ENCODE measurements at regions of chr19 and their contacts with region 1.

Region 1: GRCh38 chr19:17282488-17283255 is 971 bp downstream of the ANKLE1 start:
- DNase-seq: no peak
- H3K4me3 ChIP-seq: peak overlapping the region; percentile 28
- H3K27me3 ChIP-seq: no peaks in the 10 kb centered on the region
- CTCF ChIP-seq: peak; percentile 95

Region 2: GRCh38 chr19:17069218-17069617 is 213.5 kb before region 1 on chr19:
- CTCF ChIA-PET with region 1: interaction called, 25 read pairs
- POLR2A ChIA-PET with region 1: no interaction called
- DNase-seq: no peak
- H3K4me3 ChIP-seq: no peak overlapping the region
- H3K27me3 ChIP-seq: no peaks in the 10 kb centered on the region
- CTCF ChIP-seq: no peak

Region 3: GRCh38 chr19:17075035-17075863 is 207.4 kb before region 1 on chr19 and contains the starts of genes HAUS8 and MYO9B:
- CTCF ChIA-PET with region 1: interaction called, 25 read pairs
- POLR2A ChIA-PET with region 1: no interaction called
- DNase-seq: peak; percentile 93
- H3K4me3 ChIP-seq: peak within 1 kb of the TSS; percentile 95
- H3K27me3 ChIP-seq: no peaks in the 10 kb centered on the region
- CTCF ChIP-seq: no peak
- polyA plus RNA-seq, gene HAUS8: 11.0 and 14.0 TPM in 2 replicates
- polyA plus RNA-seq, gene MYO9B: 26.5 and 40.8 TPM in 2 replicates

Region 4: DNA sequence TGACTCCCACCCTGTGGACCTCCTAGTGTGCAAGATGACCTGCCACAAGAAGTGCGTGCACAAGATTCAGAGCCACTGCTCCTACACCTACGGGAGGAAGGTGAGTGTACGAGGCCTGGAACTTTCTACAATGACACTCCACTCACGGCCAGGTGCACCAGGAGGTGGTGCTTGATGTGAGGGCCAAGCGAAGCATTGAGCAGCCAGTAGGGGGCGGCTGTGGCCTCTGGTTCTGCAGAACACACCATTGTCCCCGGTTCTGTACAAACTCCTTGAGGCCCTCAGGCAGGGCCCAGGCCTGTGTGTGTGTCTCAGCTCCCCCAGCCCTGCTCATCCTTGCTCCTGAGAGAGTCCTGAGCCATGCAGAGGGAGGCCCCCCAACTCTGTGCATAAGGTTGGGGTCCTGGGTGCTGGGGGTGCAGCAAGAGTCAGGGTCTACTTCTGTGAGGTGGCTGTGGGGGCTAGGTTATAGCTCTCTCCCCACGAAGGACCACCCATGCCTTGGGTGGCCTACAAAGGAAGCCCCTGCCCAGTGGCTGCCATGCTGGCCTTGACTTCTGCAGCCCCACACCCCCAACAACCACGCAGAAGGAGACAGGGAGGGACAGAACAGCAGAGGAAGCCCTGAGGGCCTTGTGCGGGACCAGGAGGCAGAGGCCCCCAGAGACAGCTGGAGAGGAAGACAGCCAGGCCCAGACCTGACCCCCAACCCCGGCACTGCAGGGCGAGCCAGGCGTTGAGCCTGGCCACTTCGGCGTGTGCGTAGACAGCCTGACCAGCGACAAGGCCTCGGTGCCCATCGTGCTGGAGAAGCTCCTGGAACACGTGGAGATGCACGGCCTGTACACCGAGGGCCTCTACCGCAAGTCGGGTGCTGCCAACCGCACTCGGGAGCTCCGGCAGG is 77.2 kb before region 1 on chr19:
- CTCF ChIA-PET with region 1: interaction called, 24 read pairs
- POLR2A ChIA-PET with region 1: no interaction called
- DNase-seq: no peak
- H3K4me3 ChIP-seq: no peak overlapping the region
- H3K27me3 ChIP-seq: no peaks in the 10 kb centered on the region
- CTCF ChIP-seq: peak; percentile 73

Region 5: GRCh38 chr19:17415121-17415520 is 132.4 kb after region 1 on chr19:
- CTCF ChIA-PET with region 1: no interaction called
- POLR2A ChIA-PET with region 1: no interaction called
- DNase-seq: no peak
- H3K4me3 ChIP-seq: no peak overlapping the region
- H3K27me3 ChIP-seq: 0 out of 2 replicates have a peak, but pooled peaks cover 1% of the 10 kb centered on the region
- CTCF ChIP-seq: no peak

Measured in BJ (cell line).